ENCODE measurements at regions of chr1 and their contacts with region 1.

Region 1: DNA sequence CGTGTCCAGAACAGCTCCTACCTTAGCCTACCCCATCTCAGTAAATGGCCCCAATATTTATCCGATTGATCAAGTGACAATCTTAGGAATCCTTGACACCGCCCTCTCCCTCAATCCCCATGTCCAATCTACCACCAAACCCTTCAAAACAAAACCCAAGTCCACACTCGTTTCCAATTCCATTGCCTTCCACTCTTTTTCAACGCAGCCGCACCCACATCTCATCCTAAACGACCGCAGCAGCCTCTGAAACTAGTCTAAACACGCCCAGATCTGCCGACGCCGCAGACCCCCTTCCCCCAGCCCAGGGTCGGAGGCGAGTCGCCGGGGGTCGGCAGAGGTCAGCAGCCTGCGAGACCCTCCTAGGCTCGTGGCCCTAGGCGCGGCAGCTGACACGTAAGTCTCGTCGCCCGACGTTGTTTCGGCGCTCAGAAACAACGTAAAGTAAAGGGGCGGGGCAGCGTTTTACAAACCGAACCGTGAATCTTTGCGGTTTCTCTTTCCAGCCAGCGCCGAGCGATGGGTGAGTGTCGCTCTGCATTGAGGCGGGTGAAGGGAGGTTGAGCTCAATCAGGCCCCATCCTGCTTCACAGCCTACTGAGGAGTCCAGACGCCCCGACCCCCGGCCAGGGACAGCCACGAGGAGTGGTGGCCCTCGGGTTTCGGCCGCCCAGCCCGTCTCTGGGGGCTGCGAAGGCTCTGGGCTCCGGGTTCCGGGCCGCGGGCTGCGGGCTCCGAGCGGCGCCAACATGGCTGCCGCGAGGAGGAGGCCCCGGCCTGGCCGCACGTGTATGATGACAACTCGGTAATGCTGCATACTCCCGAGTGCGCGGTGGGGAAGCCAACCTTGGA is at the start of gene RPS8:
- DNase-seq: peak; percentile 85
- ATAC-seq: peak; percentile 76
- H3K4me3 ChIP-seq: peak within 1 kb of the TSS; percentile 92 to 99
- H3K27ac ChIP-seq: peak within 1 kb of the TSS; percentile 86
- H3K4me1 ChIP-seq: peaks cover 10 to 24% of the 10 kb centered on the region in 2 experiments
- H3K27me3 ChIP-seq: no peaks in the 10 kb centered on the region
- CTCF ChIP-seq: no peak
- POLR2A ChIP-seq: peak; percentile 97
- RAD21 ChIP-seq: no peak
- total RNA-seq, gene RPS8: 2,296 TPM

Region 2: DNA sequence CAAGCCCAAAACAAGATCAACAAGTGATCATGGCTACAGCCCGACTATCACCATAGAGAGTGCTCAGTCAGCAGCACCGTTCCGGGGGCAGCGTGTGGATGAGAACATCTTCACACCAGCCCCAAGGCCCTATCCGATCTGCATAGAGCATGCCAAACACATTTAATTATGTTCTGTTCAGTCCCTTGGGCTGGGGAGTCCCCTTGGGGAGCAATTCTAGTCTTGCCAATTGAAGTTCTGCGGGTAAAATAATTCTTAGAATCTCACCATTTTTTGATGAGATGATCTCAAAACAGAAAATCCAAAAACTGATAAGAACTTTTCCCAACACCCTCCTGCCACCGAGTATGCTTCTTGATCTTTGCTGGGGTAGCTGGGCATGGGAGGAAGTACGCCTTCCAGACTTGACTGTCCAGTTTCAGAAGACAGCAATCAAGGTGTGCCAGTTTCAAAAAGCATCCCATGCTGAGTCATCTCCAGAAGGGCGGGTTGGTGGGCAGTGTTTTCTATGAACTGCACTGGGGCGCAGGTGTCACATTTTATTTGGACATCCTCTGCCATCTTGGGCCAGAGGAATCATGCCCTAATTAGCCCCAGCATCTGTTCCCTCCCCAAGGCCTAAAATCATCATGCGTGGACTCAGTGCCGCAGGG is 1265.5 kb before region 1 on chr1:
- CTCF ChIA-PET with region 1: no interaction called
- POLR2A ChIA-PET with region 1: no interaction called
- RAD21 ChIA-PET with region 1: no interaction called
- intact Hi-C with region 1: no loop called
- DNase-seq: no peak
- ATAC-seq: peak; percentile 77
- H3K4me3 ChIP-seq: peak overlapping the region in 1 of 2 experiments; percentile 4; a peak in 1 of 4 replicates
- H3K27ac ChIP-seq: no peak overlapping the region
- H3K4me1 ChIP-seq: peaks cover 9 to 23% of the 10 kb centered on the region in 2 experiments; a peak in 3 of 4 replicates
- H3K27me3 ChIP-seq: no peaks in the 10 kb centered on the region
- CTCF ChIP-seq: no peak
- POLR2A ChIP-seq: no peak
- RAD21 ChIP-seq: no peak

Region 3: GRCh38 chr1:44576456-44577150 is 198.7 kb before region 1 on chr1:
- CTCF ChIA-PET with region 1: no interaction called
- POLR2A ChIA-PET with region 1: no interaction called
- RAD21 ChIA-PET with region 1: no interaction called
- intact Hi-C with region 1: no loop called
- DNase-seq: no peak
- ATAC-seq: no peak
- H3K4me3 ChIP-seq: no peak overlapping the region
- H3K27ac ChIP-seq: no peak overlapping the region
- H3K4me1 ChIP-seq: peaks cover 0 to 3% of the 10 kb centered on the region in 2 experiments; a peak in 1 of 4 replicates
- H3K27me3 ChIP-seq: no peaks in the 10 kb centered on the region
- CTCF ChIP-seq: no peak
- POLR2A ChIP-seq: no peak
- RAD21 ChIP-seq: no peak

Region 4: DNA sequence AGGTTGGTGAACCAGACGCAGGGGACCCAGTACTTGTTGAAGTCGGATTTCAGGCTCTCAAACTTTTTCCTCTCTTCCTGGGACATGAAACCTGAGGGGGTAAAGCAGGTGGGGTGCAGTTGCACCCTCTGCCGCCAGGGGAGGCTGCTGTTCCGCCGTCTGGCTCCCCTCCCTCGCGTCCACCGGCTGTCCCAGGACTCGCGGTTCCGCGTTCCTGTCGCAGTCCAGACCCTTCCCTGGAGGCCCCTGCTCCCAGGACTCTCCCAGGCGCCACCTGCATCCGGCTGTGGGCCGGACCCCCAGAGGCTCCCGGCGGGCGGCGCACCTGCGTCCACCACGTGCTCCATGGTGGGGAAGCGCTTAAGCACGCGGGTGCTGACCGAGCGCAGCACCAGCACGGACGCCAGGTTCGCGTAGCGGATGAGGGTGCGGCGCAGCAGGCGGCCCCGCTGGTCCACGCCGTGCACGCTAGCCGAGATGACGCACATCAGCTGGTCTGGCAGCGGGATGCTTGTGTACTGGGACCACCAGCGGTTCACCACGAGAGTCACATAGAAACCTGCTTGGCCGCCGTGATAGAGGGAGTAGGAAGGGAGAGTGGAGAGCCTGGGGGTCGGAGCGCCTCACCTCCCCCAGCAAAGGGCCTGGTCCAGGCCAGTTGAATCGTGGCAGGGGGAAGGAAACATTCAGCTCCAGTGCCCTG is 11.0 kb after region 1 on chr1:
- CTCF ChIA-PET with region 1: interaction called, 3 read pairs
- POLR2A ChIA-PET with region 1: interaction called, 16 read pairs
- RAD21 ChIA-PET with region 1: no interaction called
- intact Hi-C with region 1: no loop called
- DNase-seq: peak; percentile 45
- ATAC-seq: peak; percentile 80
- H3K4me3 ChIP-seq: peak overlapping the region; percentile 35 to 51
- H3K27ac ChIP-seq: peak overlapping the region; percentile 52
- H3K4me1 ChIP-seq: peaks cover 6 to 24% of the 10 kb centered on the region in 2 experiments
- H3K27me3 ChIP-seq: no peaks in the 10 kb centered on the region
- CTCF ChIP-seq: peak; percentile 80 to 99 (median 99)
- POLR2A ChIP-seq: no peak
- RAD21 ChIP-seq: peak; percentile 93

Region 5: DNA sequence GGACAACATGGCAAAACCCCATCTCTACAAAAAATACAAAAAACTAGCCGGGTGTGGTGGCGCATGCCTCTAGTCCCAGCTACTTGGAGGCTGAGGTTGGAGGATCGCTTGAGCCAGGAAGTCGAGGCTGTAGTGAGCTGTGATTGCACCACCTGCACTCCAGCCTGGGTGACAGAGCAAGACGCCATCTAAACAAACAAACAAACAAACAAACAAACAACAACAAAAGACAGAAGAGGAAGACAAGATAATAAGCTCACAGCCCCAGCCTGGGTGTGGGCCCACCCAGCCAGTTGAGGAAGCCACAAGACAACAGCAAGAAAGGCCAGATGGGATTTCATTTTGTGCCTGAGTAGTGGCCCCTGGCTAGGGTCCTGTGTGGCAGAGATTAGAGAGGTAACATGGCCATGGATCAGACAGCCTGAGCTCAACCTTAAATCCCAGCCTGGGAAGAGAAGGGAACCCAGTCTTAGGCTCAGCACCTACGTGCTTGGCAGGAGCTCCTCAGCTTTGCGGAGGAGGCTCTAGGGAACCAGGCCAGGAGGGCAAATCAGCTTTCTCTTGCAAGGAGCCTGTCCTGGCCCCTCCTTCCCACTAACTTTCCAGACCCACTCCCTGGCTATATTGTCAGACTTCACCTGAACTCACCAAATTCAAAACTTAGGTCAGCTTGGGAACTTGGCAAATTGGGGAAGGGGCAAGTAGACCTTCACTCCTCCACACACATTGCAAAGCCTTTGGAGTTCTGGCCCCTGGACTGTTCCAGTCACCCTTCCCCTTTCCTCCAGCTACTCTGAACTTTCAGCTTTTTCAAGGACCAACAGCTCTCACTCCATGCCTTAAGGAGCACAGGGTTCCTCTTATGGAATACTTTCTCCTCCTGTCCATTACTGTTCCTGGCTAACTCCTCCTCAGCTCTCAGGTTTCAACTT is 17.7 kb after region 1 on chr1:
- CTCF ChIA-PET with region 1: interaction called, 4 read pairs
- POLR2A ChIA-PET with region 1: interaction called, 11 read pairs
- RAD21 ChIA-PET with region 1: no interaction called
- intact Hi-C with region 1: no loop called
- DNase-seq: no peak
- ATAC-seq: no peak
- H3K4me3 ChIP-seq: peak overlapping the region in 1 of 2 experiments; percentile 8; a peak in 1 of 4 replicates
- H3K27ac ChIP-seq: peak overlapping the region; percentile 58
- H3K4me1 ChIP-seq: peaks cover 14 to 30% of the 10 kb centered on the region in 2 experiments; a peak in 3 of 4 replicates
- H3K27me3 ChIP-seq: no peaks in the 10 kb centered on the region
- CTCF ChIP-seq: no peak
- POLR2A ChIP-seq: no peak
- RAD21 ChIP-seq: no peak

Region 6: DNA sequence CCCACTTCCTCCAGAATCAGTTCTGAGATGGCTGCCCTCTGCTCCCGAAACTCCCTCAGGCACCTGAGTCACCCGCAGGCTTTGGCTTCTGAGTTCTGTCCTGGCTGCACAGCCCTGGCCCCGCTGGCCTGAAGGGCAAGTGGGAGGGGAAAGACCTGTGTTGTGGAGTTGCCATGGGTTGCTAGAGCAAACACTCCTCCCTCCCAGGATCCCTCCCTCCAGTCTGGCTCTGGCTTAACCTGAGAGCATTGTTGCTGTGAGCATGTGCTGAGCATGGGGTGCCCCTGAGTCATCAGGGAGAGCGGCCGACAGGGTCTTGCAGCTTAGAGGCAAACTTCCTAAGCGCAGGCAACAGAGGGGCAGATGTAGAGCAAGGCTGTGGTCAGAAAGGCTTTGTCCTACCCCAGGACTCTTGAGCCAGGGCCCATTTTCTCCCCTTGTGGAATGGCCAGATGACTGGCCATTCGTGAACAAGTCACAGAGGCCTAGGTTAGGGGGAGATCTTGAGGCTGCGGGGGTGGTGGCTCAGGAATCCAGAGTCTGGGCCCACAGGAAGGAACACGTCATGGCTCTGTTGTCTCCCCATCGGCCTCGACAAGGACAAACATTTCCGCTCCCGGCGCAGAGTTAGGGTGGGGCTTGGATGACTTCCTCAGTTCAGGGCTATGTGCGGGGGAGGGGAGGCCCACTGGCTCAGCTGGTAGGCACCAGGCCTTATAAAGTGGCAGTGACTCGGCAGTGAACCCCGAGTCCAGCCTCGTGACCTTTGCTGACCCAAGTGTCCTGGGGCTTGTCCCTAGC is 32.2 kb after region 1 on chr1 and contains the start of gene DYNLT4:
- CTCF ChIA-PET with region 1: no interaction called
- POLR2A ChIA-PET with region 1: interaction called, 10 read pairs
- RAD21 ChIA-PET with region 1: no interaction called
- intact Hi-C with region 1: no loop called
- DNase-seq: peak; percentile 98
- ATAC-seq: peak; percentile 74
- H3K4me3 ChIP-seq: peak within 1 kb of the TSS; percentile 30 to 32
- H3K27ac ChIP-seq: peak within 1 kb of the TSS; percentile 98
- H3K4me1 ChIP-seq: peaks cover 58 to 96% of the 10 kb centered on the region in 2 experiments
- H3K27me3 ChIP-seq: no peaks in the 10 kb centered on the region
- CTCF ChIP-seq: no peak
- POLR2A ChIP-seq: peak; percentile 58
- RAD21 ChIP-seq: no peak
- total RNA-seq, gene DYNLT4: 0.96 TPM

Region 7: DNA sequence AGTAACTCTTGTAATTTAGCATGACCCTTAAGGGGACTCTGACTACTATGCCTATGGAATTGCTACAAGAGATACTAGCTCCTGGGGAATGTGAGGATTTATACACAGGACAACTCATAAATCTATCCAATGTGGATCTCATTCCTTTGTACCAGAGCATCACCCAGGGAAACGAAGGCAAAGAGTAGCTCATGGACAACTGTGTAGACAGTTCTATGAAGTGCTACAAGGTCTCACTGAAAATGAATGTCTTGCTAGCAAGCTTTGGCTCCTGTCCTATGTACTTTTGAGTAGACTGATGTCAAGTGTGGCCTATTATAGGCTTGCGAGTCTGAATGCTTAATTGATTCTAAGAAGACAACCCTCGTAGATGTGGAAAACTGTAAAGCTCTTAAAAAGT is 337.4 kb after region 1 on chr1:
- CTCF ChIA-PET with region 1: no interaction called
- POLR2A ChIA-PET with region 1: no interaction called
- RAD21 ChIA-PET with region 1: no interaction called
- intact Hi-C with region 1: no loop called
- DNase-seq: no peak
- ATAC-seq: no peak
- H3K4me3 ChIP-seq: no peak overlapping the region
- H3K27ac ChIP-seq: no peak overlapping the region
- H3K4me1 ChIP-seq: no peaks in the 10 kb centered on the region
- H3K27me3 ChIP-seq: no peaks in the 10 kb centered on the region
- CTCF ChIP-seq: no peak
- POLR2A ChIP-seq: no peak
- RAD21 ChIP-seq: no peak